ENCODE measurements at regions of chr15 and their contacts with region 1.

Region 1: GRCh38 chr15:39756806-39757522 is 25.7 kb downstream of the FSIP1 start:
- DNase-seq: peak; percentile 75
- H3K4me3 Mint-ChIP-seq: no peak overlapping the region
- H3K27ac Mint-ChIP-seq: no peak overlapping the region
- H3K4me1 Mint-ChIP-seq: no peaks in the 10 kb centered on the region
- H3K27me3 Mint-ChIP-seq: peaks cover 49% of the 10 kb centered on the region

Region 2: GRCh38 chr15:38707802-38708671 is 1048.9 kb before region 1 on chr15:
- intact Hi-C with region 1: loop called (anchors 2 kb)
- DNase-seq: peak; percentile 84
- H3K4me3 Mint-ChIP-seq: no peak overlapping the region
- H3K27ac Mint-ChIP-seq: no peak overlapping the region
- H3K4me1 Mint-ChIP-seq: peaks cover 13% of the 10 kb centered on the region
- H3K27me3 Mint-ChIP-seq: peaks cover 17% of the 10 kb centered on the region

Region 3: DNA sequence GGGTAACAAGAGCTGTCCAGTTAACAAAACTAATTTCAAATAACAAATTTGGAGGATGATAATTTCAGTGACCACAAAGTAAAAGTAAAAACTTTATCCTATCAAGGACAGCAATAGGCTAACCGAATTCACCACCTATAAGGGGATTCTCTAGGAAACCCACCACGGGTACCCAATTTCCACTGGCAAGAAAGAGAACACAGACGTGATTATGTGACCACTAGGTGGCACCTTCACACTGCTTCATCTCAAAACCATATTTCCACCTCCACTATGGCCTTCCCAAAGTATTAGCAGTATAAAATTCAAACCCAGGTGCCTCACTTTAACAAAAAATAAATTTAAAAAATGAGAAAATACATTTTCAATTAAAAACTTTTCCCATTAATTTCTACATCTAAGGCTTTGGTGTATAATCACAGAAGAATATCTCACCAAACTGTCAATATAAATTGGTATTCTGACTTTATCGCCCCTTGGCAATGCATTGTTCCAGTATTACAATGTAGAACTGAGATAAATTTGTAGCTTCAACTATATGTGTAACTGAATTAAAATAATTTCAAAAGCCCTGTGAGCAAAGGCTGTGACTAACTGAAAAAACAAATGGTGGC is 70.9 kb before region 1 on chr15:
- intact Hi-C with region 1: loop called (anchors 1 kb)
- DNase-seq: peak; percentile 77
- H3K4me3 Mint-ChIP-seq: no peak overlapping the region
- H3K27ac Mint-ChIP-seq: no peak overlapping the region
- H3K4me1 Mint-ChIP-seq: peaks cover 3% of the 10 kb centered on the region
- H3K27me3 Mint-ChIP-seq: peaks cover 11% of the 10 kb centered on the region

Region 4: DNA sequence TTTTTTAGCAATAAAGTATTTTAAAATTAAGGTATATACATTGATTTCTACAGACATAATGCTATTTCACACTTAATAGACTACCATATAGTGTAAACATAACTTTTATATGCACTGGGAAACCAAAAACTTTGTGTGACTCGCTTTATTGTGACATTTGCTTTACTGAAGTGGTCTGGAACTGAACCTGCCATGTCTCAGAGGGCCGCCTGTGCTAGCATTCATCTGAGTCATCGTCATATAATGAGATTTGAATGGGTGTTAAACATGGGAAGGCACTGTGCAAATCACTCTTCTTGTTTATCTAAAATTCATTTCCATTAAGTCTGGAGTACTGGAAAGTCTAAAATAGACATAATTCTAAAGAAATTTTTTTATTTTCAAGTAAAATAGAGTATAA is 189.9 kb after region 1 on chr15:
- intact Hi-C with region 1: no loop called
- DNase-seq: no peak
- H3K4me3 Mint-ChIP-seq: no peak overlapping the region
- H3K27ac Mint-ChIP-seq: no peak overlapping the region
- H3K4me1 Mint-ChIP-seq: peaks cover 30% of the 10 kb centered on the region
- H3K27me3 Mint-ChIP-seq: no peaks in the 10 kb centered on the region

Measured in activated CD4-positive, alpha-beta T cell treated with anti-CD3 and anti-CD28 coated beads, Interleukin-2, amount 10 ng/mL, durations not matched to agents 24 days and 14 days (primary cell).